Heart left ventricle (tissue), 16 donors: ENCODE measurements at regions of chr5 and their contacts with region 1.

Region 1: DNA sequence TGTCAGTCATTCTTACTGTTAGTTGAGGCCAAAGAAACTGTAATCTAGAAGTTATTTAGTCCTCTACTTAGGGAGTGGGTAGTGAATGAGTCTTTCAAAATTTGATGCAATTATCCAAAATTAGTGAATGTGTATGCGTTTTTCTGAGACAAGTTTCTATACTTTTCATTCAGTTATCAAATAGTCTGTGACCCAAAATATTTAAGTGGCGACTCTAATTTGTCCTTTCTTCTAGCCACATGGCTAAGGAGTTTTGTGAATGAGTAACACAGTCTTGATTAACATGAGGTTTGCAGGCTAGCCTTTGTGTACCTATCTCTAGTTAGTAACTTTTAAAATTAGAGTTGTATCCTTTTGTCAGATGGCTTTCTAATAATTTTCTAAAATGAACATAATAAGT is 45.6 kb downstream of the COMMD10 start:
- DNase-seq: no peak
- ATAC-seq: no peak
- H3K4me3 ChIP-seq: no peak overlapping the region
- H3K27ac ChIP-seq: no peak overlapping the region
- H3K4me1 ChIP-seq: peaks cover 0 to 12% (median 1%) of the 10 kb centered on the region in 12 donors
- H3K27me3 ChIP-seq: no peaks in the 10 kb centered on the region
- CTCF ChIP-seq: no peak
- POLR2A ChIP-seq: no peak

Region 2: DNA sequence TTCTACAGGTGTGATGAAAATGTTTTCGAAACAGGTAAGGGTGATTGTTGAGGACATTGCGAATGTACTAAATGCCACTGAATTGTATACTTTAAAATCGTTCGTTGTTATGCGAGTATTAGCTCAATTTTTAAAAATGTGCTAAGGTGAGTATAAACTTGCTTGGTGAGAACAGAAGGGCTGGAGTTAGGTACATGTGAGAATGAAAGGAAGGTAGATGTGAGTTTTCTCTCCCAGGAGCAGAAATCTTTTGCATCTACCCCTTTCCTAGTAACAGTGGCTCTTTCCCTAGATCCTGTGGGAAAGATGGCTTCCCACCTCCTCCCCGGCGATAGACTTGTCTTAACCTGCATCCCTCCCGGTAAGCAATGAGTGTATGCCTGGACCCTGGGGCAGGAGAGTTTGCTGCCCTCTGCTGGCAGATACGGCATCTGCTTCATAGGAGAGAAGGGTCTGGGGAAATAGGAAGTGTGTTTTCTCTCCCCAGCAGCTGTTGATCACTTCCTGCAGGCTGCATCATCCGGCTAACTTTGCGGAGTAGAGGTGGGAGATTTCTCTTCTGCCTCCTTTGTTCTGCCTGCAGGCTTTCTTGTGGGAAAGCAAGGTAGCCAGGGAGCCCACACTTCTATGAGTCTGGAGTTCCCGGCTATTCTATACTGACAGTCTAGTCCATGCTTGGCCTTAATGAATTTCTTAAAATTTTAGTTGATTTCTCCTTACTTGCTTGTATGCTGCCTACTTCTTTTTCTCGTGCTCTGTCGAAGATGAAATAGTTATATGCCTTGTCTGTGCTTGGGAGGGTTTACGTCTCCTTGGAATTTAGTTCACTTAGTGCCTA is 817.4 kb after region 1 on chr5:
- intact Hi-C with region 1: loop called in 5 of 10 experiments (anchors 5 to 10 kb)
- DNase-seq: peak; percentile 42 to 68 (median 62)
- ATAC-seq: peak; percentile 81 to 89 (median 88)
- H3K4me3 ChIP-seq: no peak overlapping the region
- H3K27ac ChIP-seq: no peak overlapping the region
- H3K4me1 ChIP-seq: peaks cover 0 to 6% (median 0%) of the 10 kb centered on the region in 12 donors
- H3K27me3 ChIP-seq: no peaks in the 10 kb centered on the region
- CTCF ChIP-seq: peak; percentile 54 to 82 (median 72)
- POLR2A ChIP-seq: no peak